CD8-positive, alpha-beta memory T cell (primary cell): ENCODE measurements at regions of chr1 and their contacts with region 1.

Region 1: GRCh38 chr1:89943846-89944781 is 50.8 kb upstream of the ZNF326 start:
- DNase-seq: no peak
- H3K4me3 ChIP-seq: no peak overlapping the region
- H3K4me3 Mint-ChIP-seq: no peak overlapping the region
- H3K27ac ChIP-seq: no peak overlapping the region
- H3K27ac Mint-ChIP-seq: no peak overlapping the region
- H3K4me1 ChIP-seq: no peaks in the 10 kb centered on the region
- H3K4me1 Mint-ChIP-seq: peaks cover 0 to 5% (median 0%) of the 10 kb centered on the region in 3 donors
- H3K27me3 ChIP-seq: no peaks in the 10 kb centered on the region
- H3K27me3 Mint-ChIP-seq: peaks cover 0 to 3% of the 10 kb centered on the region in 2 donors

Region 2: GRCh38 chr1:89743788-89744187 is 200.3 kb before region 1 on chr1:
- CTCF ChIA-PET with region 1: no interaction called
- POLR2A ChIA-PET with region 1: no interaction called
- DNase-seq: no peak
- H3K4me3 ChIP-seq: no peak overlapping the region
- H3K4me3 Mint-ChIP-seq: no peak overlapping the region
- H3K27ac ChIP-seq: no peak overlapping the region
- H3K27ac Mint-ChIP-seq: peak overlapping the region in 1 of 8 donors; percentile 19
- H3K4me1 ChIP-seq: peaks cover 30% of the 10 kb centered on the region
- H3K4me1 Mint-ChIP-seq: peaks cover 52 to 69% (median 63%) of the 10 kb centered on the region in 3 donors
- H3K27me3 ChIP-seq: no peaks in the 10 kb centered on the region
- H3K27me3 Mint-ChIP-seq: no peaks in the 10 kb centered on the region

Region 3: GRCh38 chr1:89804642-89805237 is 139.4 kb before region 1 on chr1:
- CTCF ChIA-PET with region 1: no interaction called
- POLR2A ChIA-PET with region 1: no interaction called
- DNase-seq: peak; percentile 60 to 86 (median 74)
- H3K4me3 ChIP-seq: no peak overlapping the region
- H3K4me3 Mint-ChIP-seq: no peak overlapping the region
- H3K27ac ChIP-seq: no peak overlapping the region
- H3K27ac Mint-ChIP-seq: no peak overlapping the region
- H3K4me1 ChIP-seq: no peaks in the 10 kb centered on the region
- H3K4me1 Mint-ChIP-seq: no peaks in the 10 kb centered on the region
- H3K27me3 ChIP-seq: no peaks in the 10 kb centered on the region
- H3K27me3 Mint-ChIP-seq: peaks cover 3 to 5% of the 10 kb centered on the region in 2 donors

Region 4: DNA sequence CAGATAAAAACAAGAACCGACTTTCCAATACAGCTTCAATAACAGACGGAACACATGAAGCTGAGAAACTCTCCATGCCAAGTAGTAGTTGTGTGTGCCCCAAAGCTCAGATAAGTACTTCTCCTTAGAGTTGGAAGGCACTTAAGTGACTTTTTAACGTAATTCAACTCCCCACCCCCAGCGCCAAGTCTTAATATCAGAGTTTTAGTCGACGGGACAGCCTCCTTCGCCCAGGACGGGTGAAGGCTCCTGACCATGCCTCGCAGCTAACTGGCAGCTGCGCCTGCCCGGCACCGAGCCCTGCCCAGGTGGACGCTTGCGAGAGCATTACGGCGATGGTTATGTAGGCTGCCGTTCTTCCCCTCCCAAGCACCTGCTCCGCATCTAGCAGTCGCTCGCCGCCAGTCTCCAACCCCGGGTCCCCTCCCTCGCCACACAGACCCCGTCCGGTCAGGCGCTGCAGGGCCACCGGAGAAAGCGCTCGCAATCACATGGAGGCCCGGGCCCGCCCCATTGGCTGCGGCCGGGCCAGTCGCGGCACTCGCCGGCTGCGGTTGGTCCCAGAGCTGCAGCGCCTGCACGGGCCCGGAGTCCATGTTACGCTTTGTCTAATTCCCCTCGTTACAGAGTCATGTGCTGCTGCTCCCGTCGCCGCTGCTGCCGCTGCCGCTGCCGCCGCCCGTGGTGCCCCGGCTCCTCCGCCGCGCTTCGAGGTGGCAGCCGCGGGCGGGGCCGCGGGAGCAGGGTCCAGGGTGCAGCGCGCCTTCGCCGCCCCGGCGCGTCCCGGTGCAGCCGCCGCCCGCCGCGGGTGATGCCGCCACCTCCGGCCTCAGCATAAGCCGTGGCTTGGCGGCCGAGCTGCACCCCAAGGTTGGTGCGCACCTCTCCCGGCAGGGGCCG is 123.4 kb before region 1 on chr1 and contains the start of gene LRRC8D:
- CTCF ChIA-PET with region 1: no interaction called
- POLR2A ChIA-PET with region 1: interaction called, 12 read pairs
- DNase-seq: peak; percentile 49 to 73 (median 71)
- H3K4me3 ChIP-seq: peak within 1 kb of the TSS; percentile 83
- H3K4me3 Mint-ChIP-seq: peak within 1 kb of the TSS; percentile 85 to 92 (median 88)
- H3K27ac ChIP-seq: peak within 1 kb of the TSS; percentile 72
- H3K27ac Mint-ChIP-seq: peak within 1 kb of the TSS in 7 of 8 donors; percentile 21 to 93 (median 86)
- H3K4me1 ChIP-seq: peaks cover 19% of the 10 kb centered on the region
- H3K4me1 Mint-ChIP-seq: peaks cover 26 to 36% (median 33%) of the 10 kb centered on the region in 3 donors
- H3K27me3 ChIP-seq: no peaks in the 10 kb centered on the region
- H3K27me3 Mint-ChIP-seq: no peaks in the 10 kb centered on the region
- total RNA-seq, gene LRRC8D: 39.0 to 41.9 TPM